Heart left ventricle (tissue), 16 donors: ENCODE measurements at regions of chr10 and their contacts with region 1.

Region 1: GRCh38 chr10:89314676-89315075 is 12.8 kb downstream of the IFIT2 start:
- DNase-seq: no peak
- ATAC-seq: no peak
- H3K4me3 ChIP-seq: no peak overlapping the region
- H3K27ac ChIP-seq: no peak overlapping the region
- H3K4me1 ChIP-seq: peaks cover 0 to 3% (median 0%) of the 10 kb centered on the region in 12 donors
- H3K27me3 ChIP-seq: no peaks in the 10 kb centered on the region
- CTCF ChIP-seq: no peak
- POLR2A ChIP-seq: no peak

Region 2: GRCh38 chr10:88848499-88848898 is 466.2 kb before region 1 on chr10:
- intact Hi-C with region 1: no loop called
- DNase-seq: no peak
- ATAC-seq: no peak
- H3K4me3 ChIP-seq: no peak overlapping the region
- H3K27ac ChIP-seq: peak overlapping the region in 1 of 12 donors; percentile 50
- H3K4me1 ChIP-seq: peaks cover 0 to 34% (median 0%) of the 10 kb centered on the region in 12 donors
- H3K27me3 ChIP-seq: no peaks in the 10 kb centered on the region
- CTCF ChIP-seq: no peak
- POLR2A ChIP-seq: no peak

Region 3: DNA sequence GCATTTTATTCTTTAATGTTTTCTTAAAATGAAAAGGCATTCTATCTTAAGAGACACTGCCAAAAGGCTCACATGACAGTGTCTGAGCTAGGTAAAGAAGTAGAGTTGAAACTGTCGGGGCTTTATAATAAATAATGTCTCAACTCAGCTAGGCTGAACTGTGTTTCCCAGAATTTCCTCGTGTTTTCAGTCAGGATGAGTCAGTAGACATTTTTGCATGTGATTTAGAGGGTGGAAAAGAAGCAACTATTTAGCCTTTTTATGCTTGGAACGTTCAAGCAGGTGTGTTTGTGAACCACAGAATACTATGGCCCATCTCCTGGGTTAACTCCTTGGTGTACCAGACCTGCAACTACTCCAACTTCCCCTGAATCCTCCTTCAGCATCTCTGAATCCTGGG is 39.7 kb before region 1 on chr10:
- intact Hi-C with region 1: loop called in 1 of 10 experiments (anchors 5 kb)
- DNase-seq: no peak
- ATAC-seq: no peak
- H3K4me3 ChIP-seq: no peak overlapping the region
- H3K27ac ChIP-seq: no peak overlapping the region
- H3K4me1 ChIP-seq: peaks cover 4 to 40% (median 25%) of the 10 kb centered on the region in 12 donors
- H3K27me3 ChIP-seq: no peaks in the 10 kb centered on the region
- CTCF ChIP-seq: no peak
- POLR2A ChIP-seq: no peak